Psoas muscle (tissue), 8 donors: ENCODE measurements at regions of chr20 and their contacts with region 1.

Region 1: DNA sequence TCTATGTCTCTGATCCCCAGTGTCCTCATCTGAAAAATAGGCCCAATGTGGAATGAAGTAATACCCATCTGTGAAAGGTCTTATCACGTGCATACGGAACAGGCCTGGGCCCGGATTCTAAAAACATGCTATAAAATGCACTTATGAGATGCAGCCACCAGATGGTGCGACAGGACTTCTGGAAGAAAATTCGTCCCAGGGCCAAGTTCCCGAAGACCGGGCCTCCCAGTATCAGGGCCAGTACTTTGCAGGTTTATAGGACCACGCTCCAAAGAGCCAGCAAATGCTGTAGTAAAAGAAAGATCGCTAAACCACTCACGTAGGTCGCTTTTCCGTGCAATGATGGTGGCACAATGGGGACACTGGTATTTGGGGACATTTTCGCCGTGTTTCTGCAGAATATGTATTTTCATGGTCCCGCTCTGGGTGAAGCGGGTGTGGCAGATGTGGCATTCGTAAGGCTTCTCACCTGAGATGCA is 10.6 kb downstream of the CTCFL start:
- DNase-seq: peak; percentile 45 to 63
- ATAC-seq: peak; percentile 75 to 88 (median 76)
- H3K4me3 ChIP-seq: no peak overlapping the region
- H3K27ac ChIP-seq: no peak overlapping the region
- H3K4me1 ChIP-seq: no peaks in the 10 kb centered on the region
- H3K27me3 ChIP-seq: peaks cover 0 to under 1% (median 0%) of the 10 kb centered on the region in 3 donors
- CTCF ChIP-seq: peak; percentile 79

Region 2: GRCh38 chr20:58209652-58210397 is 695.5 kb after region 1 on chr20:
- intact Hi-C with region 1: loop called (anchors 1 to 5 kb)
- DNase-seq: peak; percentile 83 to 91
- ATAC-seq: peak; percentile 92 to 96 (median 92)
- H3K4me3 ChIP-seq: no peak overlapping the region
- H3K27ac ChIP-seq: no peak overlapping the region
- H3K4me1 ChIP-seq: no peaks in the 10 kb centered on the region
- H3K27me3 ChIP-seq: peaks cover 0 to 17% (median 4%) of the 10 kb centered on the region in 3 donors
- CTCF ChIP-seq: peak; percentile 100